GM12878 (cell line): ENCODE measurements at regions of chrX and their contacts with region 1.

Region 1: DNA sequence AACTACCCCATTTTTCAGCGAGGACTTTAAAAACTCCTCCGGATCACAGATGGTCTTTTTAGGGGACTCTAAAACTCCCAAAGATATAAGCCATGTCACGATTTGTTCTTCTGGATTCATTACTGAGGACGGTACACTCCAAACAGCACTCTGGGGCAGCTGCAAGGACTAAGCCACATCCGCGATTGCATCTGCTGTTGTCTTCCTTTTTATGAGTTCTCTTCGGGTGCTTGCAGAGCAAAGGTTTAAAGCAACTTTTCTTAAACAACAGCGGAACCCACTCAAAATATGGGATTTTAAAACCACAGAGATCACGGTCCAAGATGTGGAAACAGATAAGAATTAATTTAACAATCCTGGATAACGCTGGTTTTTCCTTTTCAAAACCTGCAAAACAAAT is at the start of gene ARHGEF6:
- DNase-seq: no peak
- ATAC-seq: peak; percentile 63
- H3K4me3 ChIP-seq: peak within 1 kb of the TSS; percentile 49
- H3K27ac ChIP-seq: peak within 1 kb of the TSS; percentile 79
- H3K4me1 ChIP-seq: peaks cover 7% of the 10 kb centered on the region; the same call in 1 of the 2 replicates
- H3K27me3 ChIP-seq: no peaks in the 10 kb centered on the region
- CTCF ChIP-seq: no peak
- EP300 ChIP-seq: no peak
- POLR2A ChIP-seq: no peak
- RAD21 ChIP-seq: no peak
- polyA plus RNA-seq, gene ARHGEF6: 5.4 to 6.5 TPM

Region 2: DNA sequence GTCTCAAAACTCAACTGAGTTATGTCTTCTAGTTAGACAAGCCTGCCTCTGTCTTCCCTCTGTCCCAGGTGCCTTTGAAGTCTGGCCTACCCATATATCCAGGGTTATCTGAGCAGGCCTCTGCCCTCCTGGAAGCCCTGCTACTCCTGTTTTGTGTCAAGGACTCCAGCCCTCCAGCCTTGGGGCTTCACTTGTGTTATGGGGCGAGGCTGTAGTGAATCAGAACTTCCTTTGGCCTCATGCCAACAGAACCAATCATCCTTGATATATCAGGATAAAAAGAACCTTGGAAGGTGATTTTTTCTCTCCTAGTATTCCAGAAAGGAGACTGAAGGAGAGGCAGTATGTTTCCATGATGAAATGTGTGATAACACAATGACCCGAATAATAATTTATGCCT is 488.9 kb before region 1 on chrX:
- CTCF ChIA-PET with region 1: no interaction called
- POLR2A ChIA-PET with region 1: no interaction called
- RAD21 ChIA-PET with region 1: no interaction called
- SMC1A ChIA-PET with region 1: no interaction called
- in situ Hi-C with region 1: no loop called
- intact Hi-C with region 1: no loop called
- DNase-seq: no peak
- ATAC-seq: no peak
- H3K4me3 ChIP-seq: no peak overlapping the region
- H3K27ac ChIP-seq: no peak overlapping the region
- H3K4me1 ChIP-seq: no peaks in the 10 kb centered on the region
- H3K27me3 ChIP-seq: no peaks in the 10 kb centered on the region
- CTCF ChIP-seq: no peak
- EP300 ChIP-seq: no peak
- POLR2A ChIP-seq: no peak
- RAD21 ChIP-seq: no peak

Region 3: DNA sequence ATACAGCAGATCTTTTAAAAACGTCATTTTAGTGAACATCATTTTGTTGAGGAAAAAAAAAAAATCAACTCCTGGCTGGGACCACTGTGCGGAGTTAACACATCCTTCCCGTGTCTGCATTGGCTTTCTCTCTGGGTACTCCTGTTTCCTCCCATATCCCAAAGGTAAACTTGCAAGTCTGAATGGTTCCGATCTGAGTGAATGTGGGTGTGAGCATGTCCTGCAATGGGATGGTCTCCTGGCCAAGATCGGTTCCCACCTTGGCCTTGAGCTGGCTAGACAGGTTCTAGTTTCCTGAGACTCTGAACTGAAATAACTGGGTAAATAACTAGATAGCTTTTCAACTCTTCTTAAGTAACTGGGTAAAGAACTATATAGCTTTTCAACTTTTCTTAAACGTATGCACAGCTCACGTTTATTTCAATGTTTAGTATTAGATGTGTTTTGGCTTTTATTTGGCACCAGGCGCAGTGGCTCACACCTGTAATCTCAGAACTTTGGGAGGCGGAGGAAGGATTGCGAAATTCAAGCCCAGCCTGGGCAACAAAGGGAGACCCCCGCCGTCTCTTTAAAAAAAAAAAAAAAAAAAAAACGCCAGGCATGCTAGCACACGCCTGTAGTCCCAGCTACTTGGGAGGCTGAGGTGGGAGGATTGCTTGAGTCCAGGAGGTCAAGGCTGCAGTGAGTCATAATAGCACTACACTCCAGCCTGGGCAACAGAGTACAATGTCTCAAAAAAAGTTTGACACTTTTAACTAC is 85.8 kb after region 1 on chrX:
- CTCF ChIA-PET with region 1: no interaction called
- POLR2A ChIA-PET with region 1: no interaction called
- RAD21 ChIA-PET with region 1: no interaction called
- SMC1A ChIA-PET with region 1: no interaction called
- in situ Hi-C with region 1: no loop called
- intact Hi-C with region 1: loop called (anchors 5 kb)
- DNase-seq: no peak
- ATAC-seq: no peak
- H3K4me3 ChIP-seq: no peak overlapping the region
- H3K27ac ChIP-seq: no peak overlapping the region
- H3K4me1 ChIP-seq: no peaks in the 10 kb centered on the region
- H3K27me3 ChIP-seq: no peaks in the 10 kb centered on the region
- CTCF ChIP-seq: no peak
- EP300 ChIP-seq: no peak
- POLR2A ChIP-seq: peak; percentile 32
- RAD21 ChIP-seq: no peak

Region 4: DNA sequence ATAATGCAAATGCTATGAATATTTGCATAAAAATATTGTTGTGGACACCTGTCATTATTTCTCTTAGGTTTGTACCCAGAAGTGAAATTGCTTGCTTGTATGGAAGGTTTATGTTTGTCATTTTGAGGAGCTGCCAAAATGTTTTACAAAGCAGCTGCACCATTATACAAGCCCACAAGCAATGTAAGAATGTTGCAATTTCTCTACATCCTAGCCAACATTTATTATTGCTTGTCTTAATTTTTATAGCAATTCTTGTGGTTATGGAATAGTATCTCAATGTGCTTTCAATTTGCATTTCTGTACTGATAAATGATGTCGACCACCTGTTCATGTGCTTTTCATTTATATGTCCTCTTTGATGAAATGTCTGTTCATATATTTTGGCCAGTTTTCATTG is 118.5 kb after region 1 on chrX:
- CTCF ChIA-PET with region 1: no interaction called
- POLR2A ChIA-PET with region 1: no interaction called
- RAD21 ChIA-PET with region 1: no interaction called
- SMC1A ChIA-PET with region 1: no interaction called
- in situ Hi-C with region 1: no loop called
- intact Hi-C with region 1: no loop called
- DNase-seq: no peak
- ATAC-seq: no peak
- H3K4me3 ChIP-seq: no peak overlapping the region
- H3K27ac ChIP-seq: no peak overlapping the region
- H3K4me1 ChIP-seq: no peaks in the 10 kb centered on the region
- H3K27me3 ChIP-seq: no peaks in the 10 kb centered on the region
- CTCF ChIP-seq: no peak
- EP300 ChIP-seq: no peak
- POLR2A ChIP-seq: no peak
- RAD21 ChIP-seq: no peak